CD4-positive, alpha-beta T cell (primary cell): ENCODE measurements at regions of chr19 and their contacts with region 1.

Region 1: DNA sequence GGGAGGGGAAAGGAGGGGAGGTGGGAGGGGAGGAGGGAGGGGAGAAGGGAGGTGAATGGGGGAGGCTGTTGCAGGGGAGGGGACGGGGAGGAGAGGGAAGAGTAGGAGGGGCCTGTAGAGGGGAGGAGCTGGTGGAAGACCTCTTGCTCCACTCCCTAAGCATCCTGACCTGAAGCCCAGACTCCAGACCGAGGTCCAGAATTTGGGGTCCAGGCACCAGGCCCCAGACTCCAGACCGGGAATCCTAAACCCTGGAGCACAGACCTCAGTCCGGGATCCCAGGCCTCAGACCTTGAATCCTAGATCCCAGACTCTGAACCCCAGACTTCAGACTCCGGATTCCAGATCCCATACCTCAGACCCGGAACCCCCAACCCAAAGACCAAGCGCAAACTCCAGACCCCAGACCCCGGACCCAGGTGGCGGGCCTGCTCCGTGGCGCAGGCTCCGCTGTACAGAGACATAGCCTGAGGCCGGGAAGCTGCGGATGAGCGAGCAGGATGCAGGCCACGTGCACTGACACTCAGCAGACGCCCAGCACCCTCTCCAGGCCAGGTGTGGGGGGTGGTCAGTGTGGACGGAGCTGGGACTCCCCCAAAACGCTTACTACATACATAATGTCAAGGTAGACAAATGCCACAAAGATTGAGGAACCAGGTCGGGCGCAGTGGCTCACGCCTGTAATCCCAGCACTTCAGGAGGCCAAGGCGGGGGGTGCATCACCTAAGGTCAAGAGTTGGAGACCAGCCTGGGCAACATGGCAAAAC is 710 bp upstream of the BTBD2 start:
- DNase-seq: peak in 12 of 14 experiments; percentile 42 to 86 (median 54)
- ATAC-seq: peak; percentile 63
- H3K4me3 ChIP-seq: peak overlapping the region; percentile 30
- H3K4me3 Mint-ChIP-seq: peak overlapping the region; percentile 76
- H3K27ac ChIP-seq: no peak overlapping the region
- H3K27ac Mint-ChIP-seq: peak overlapping the region; percentile 69
- H3K4me1 ChIP-seq: peaks cover 33% of the 10 kb centered on the region
- H3K4me1 Mint-ChIP-seq: peaks cover 22% of the 10 kb centered on the region
- H3K27me3 ChIP-seq: no peaks in the 10 kb centered on the region
- H3K27me3 Mint-ChIP-seq: no peaks in the 10 kb centered on the region
- CTCF ChIP-seq: no peak

Region 2: GRCh38 chr19:1975162-1975480 is 41.1 kb before region 1 on chr19:
- CTCF ChIA-PET with region 1: no interaction called
- POLR2A ChIA-PET with region 1: no interaction called
- intact Hi-C with region 1: no loop called
- DNase-seq: no peak
- ATAC-seq: no peak
- H3K4me3 ChIP-seq: no peak overlapping the region
- H3K4me3 Mint-ChIP-seq: no peak overlapping the region
- H3K27ac ChIP-seq: no peak overlapping the region
- H3K27ac Mint-ChIP-seq: no peak overlapping the region
- H3K4me1 ChIP-seq: peaks cover 15% of the 10 kb centered on the region
- H3K4me1 Mint-ChIP-seq: peaks cover 5% of the 10 kb centered on the region
- H3K27me3 ChIP-seq: no peaks in the 10 kb centered on the region
- H3K27me3 Mint-ChIP-seq: no peaks in the 10 kb centered on the region
- CTCF ChIP-seq: no peak

Region 3: DNA sequence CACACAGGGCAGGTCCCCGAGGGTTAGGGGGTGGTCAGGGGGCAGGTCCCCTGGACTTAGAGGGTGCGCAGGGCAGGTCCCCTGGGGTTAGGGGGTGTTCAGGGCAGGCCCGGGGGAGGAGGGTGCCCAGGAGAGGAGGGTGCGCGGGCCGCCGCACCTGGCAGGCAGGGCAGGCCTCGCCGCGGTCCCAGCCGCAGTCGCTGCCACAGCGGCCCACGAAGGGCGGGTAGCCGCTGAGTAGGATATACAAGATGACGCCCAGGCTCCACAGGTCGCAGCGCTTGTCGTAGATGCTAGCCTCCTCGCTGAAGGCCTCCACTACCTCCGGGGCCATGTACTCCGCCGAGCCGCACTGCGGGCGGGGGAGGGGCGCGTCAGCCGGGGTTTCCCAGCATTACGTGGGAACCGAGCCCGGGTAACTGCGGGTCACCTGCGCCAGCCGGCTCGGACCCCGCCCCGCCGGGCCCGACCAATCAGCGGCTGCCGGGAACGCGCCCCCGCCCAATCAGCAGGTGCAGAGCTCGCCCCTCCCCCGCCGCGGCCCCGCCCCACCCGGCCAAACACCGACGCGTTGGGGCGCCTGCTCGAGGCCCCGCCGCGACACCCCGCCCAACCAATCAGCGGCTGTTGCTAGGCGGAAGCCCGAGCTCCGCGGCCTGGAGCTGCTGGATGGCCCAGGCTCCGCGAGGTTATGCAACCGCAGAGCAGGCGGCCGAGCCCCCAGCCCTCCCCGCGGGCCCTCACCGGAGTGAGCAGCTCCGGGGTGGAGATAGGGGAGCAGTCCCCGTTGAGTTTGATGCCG is 25.7 kb after region 1 on chr19:
- CTCF ChIA-PET with region 1: interaction called, 13 read pairs
- POLR2A ChIA-PET with region 1: interaction called, 6 read pairs
- intact Hi-C with region 1: no loop called
- DNase-seq: peak; percentile 99 to 100 (median 100)
- ATAC-seq: peak; percentile 78
- H3K4me3 ChIP-seq: peak overlapping the region; percentile 46
- H3K4me3 Mint-ChIP-seq: peak overlapping the region; percentile 79
- H3K27ac ChIP-seq: peak overlapping the region; percentile 98 to 99
- H3K27ac Mint-ChIP-seq: peak overlapping the region; percentile 97
- H3K4me1 ChIP-seq: peaks cover 72% of the 10 kb centered on the region
- H3K4me1 Mint-ChIP-seq: peaks cover 28% of the 10 kb centered on the region
- H3K27me3 ChIP-seq: no peaks in the 10 kb centered on the region
- H3K27me3 Mint-ChIP-seq: no peaks in the 10 kb centered on the region
- CTCF ChIP-seq: no peak

Region 4: GRCh38 chr19:2050991-2051772 is 35.0 kb after region 1 on chr19 and contains the start of gene MKNK2:
- CTCF ChIA-PET with region 1: no interaction called
- POLR2A ChIA-PET with region 1: interaction called, 5 read pairs
- intact Hi-C with region 1: loop called (anchors 5 kb)
- DNase-seq: peak; percentile 88 to 98 (median 95)
- ATAC-seq: peak; percentile 81
- H3K4me3 ChIP-seq: peak within 1 kb of the TSS; percentile 99
- H3K4me3 Mint-ChIP-seq: peak within 1 kb of the TSS; percentile 94
- H3K27ac ChIP-seq: peak within 1 kb of the TSS; percentile 83 to 87
- H3K27ac Mint-ChIP-seq: peak within 1 kb of the TSS; percentile 93
- H3K4me1 ChIP-seq: peaks cover 78% of the 10 kb centered on the region
- H3K4me1 Mint-ChIP-seq: peaks cover 37% of the 10 kb centered on the region
- H3K27me3 ChIP-seq: no peaks in the 10 kb centered on the region
- H3K27me3 Mint-ChIP-seq: no peaks in the 10 kb centered on the region
- CTCF ChIP-seq: peak; percentile 32
- total RNA-seq, gene MKNK2: 325 to 347 TPM

Region 5: GRCh38 chr19:2070436-2070827 is 54.2 kb after region 1 on chr19:
- CTCF ChIA-PET with region 1: interaction called, 13 read pairs
- POLR2A ChIA-PET with region 1: interaction called, 4 read pairs
- intact Hi-C with region 1: loop called (anchors 1 kb)
- DNase-seq: no peak
- ATAC-seq: no peak
- H3K4me3 ChIP-seq: no peak overlapping the region
- H3K4me3 Mint-ChIP-seq: no peak overlapping the region
- H3K27ac ChIP-seq: no peak overlapping the region
- H3K27ac Mint-ChIP-seq: peak overlapping the region; percentile 84
- H3K4me1 ChIP-seq: peaks cover 32% of the 10 kb centered on the region
- H3K4me1 Mint-ChIP-seq: peaks cover 16% of the 10 kb centered on the region
- H3K27me3 ChIP-seq: no peaks in the 10 kb centered on the region
- H3K27me3 Mint-ChIP-seq: no peaks in the 10 kb centered on the region
- CTCF ChIP-seq: no peak

Region 6: GRCh38 chr19:2084993-2085720 is 68.9 kb after region 1 on chr19:
- CTCF ChIA-PET with region 1: interaction called, 5 read pairs
- POLR2A ChIA-PET with region 1: interaction called, 5 read pairs
- intact Hi-C with region 1: loop called in 1 of 2 experiments (anchors 5 kb)
- DNase-seq: peak; percentile 83 to 99 (median 92)
- ATAC-seq: peak; percentile 59
- H3K4me3 ChIP-seq: peak overlapping the region; percentile 99
- H3K4me3 Mint-ChIP-seq: peak overlapping the region; percentile 93
- H3K27ac ChIP-seq: peak overlapping the region; percentile 97 to 98
- H3K27ac Mint-ChIP-seq: peak overlapping the region; percentile 97
- H3K4me1 ChIP-seq: peaks cover 85% of the 10 kb centered on the region
- H3K4me1 Mint-ChIP-seq: peaks cover 75% of the 10 kb centered on the region
- H3K27me3 ChIP-seq: no peaks in the 10 kb centered on the region
- H3K27me3 Mint-ChIP-seq: no peaks in the 10 kb centered on the region
- CTCF ChIP-seq: no peak

Region 7: GRCh38 chr19:2151339-2152229 is 135.4 kb after region 1 on chr19 and contains the start of gene AP3D1:
- CTCF ChIA-PET with region 1: interaction called, 3 read pairs
- POLR2A ChIA-PET with region 1: no interaction called
- intact Hi-C with region 1: loop called (anchors 2 to 5 kb)
- DNase-seq: peak; percentile 100
- ATAC-seq: peak; percentile 87
- H3K4me3 ChIP-seq: peak within 1 kb of the TSS; percentile 80
- H3K4me3 Mint-ChIP-seq: peak within 1 kb of the TSS; percentile 93
- H3K27ac ChIP-seq: peak within 1 kb of the TSS; percentile 77 to 92
- H3K27ac Mint-ChIP-seq: peak within 1 kb of the TSS; percentile 90
- H3K4me1 ChIP-seq: peaks cover 50% of the 10 kb centered on the region
- H3K4me1 Mint-ChIP-seq: peaks cover 31% of the 10 kb centered on the region
- H3K27me3 ChIP-seq: no peaks in the 10 kb centered on the region
- H3K27me3 Mint-ChIP-seq: no peaks in the 10 kb centered on the region
- CTCF ChIP-seq: no peak
- total RNA-seq, gene AP3D1: 41.8 to 41.9 TPM

Region 8: DNA sequence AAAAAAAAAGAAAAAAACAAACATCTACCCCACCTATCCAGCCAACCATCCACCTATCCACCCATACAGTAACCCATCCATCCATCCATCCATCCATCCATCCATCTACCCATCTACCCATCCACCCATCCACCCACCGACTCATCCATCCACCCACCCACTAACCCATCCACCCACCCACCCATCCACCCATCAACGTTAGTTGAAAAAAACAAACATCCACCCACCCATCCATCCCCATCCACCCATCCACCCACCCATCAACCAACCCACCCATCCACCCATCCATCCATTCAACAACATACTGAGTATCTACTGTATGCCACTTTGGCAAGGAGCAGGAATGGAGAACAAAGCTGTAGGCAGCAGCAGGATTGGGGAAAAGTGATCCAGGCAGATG is 141.2 kb after region 1 on chr19:
- CTCF ChIA-PET with region 1: interaction called, 3 read pairs
- POLR2A ChIA-PET with region 1: no interaction called
- intact Hi-C with region 1: loop called (anchors 2 to 5 kb)
- DNase-seq: no peak
- ATAC-seq: no peak
- H3K4me3 ChIP-seq: no peak overlapping the region
- H3K4me3 Mint-ChIP-seq: no peak overlapping the region
- H3K27ac ChIP-seq: no peak overlapping the region
- H3K27ac Mint-ChIP-seq: no peak overlapping the region
- H3K4me1 ChIP-seq: peaks cover 5% of the 10 kb centered on the region
- H3K4me1 Mint-ChIP-seq: no peaks in the 10 kb centered on the region
- H3K27me3 ChIP-seq: no peaks in the 10 kb centered on the region
- H3K27me3 Mint-ChIP-seq: no peaks in the 10 kb centered on the region
- CTCF ChIP-seq: no peak